ENCODE measurements at regions of chr5 and their contacts with region 1.

Region 1: DNA sequence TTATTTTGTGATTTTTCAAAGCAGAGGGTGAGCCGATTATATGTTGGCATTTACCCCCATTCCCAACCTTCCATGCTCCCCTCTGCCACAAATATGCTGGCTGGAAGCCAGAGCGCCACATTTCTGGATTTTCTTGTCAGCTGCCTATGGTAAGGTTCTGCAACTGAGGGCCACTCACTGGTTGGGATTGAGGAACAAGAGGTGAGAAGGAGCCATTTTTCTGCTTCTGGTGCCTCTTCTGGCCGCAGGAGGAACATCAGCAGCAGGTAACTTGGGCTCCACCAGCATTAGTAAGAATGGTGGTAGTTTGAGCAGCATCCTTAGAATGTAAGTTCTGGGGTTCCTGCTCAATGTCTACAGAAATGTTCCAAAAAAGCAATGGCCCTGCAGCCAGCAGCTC is 159.5 kb upstream of the MAST4 start:
- DNase-seq: no peak
- H3K4me3 ChIP-seq: no peak overlapping the region
- H3K27ac ChIP-seq: no peak overlapping the region
- H3K4me1 ChIP-seq: no peaks in the 10 kb centered on the region
- H3K27me3 ChIP-seq: no peaks in the 10 kb centered on the region
- CTCF ChIP-seq: peak in 1 of 3 experiments; percentile 8
- POLR2A ChIP-seq: no peak

Region 2: GRCh38 chr5:65481635-65482295 is 955.0 kb before region 1 on chr5 and contains the start of gene ADAMTS6:
- intact Hi-C with region 1: no loop called
- DNase-seq: peak; percentile 94
- H3K4me3 ChIP-seq: peak within 1 kb of the TSS; percentile 57 to 69
- H3K27ac ChIP-seq: peak within 1 kb of the TSS; percentile 86 to 96
- H3K4me1 ChIP-seq: peaks cover 6% of the 10 kb centered on the region
- H3K27me3 ChIP-seq: no peaks in the 10 kb centered on the region
- CTCF ChIP-seq: no peak
- POLR2A ChIP-seq: peak; percentile 47
- total RNA-seq, gene ADAMTS6: 25.5 to 43.1 TPM

Region 3: DNA sequence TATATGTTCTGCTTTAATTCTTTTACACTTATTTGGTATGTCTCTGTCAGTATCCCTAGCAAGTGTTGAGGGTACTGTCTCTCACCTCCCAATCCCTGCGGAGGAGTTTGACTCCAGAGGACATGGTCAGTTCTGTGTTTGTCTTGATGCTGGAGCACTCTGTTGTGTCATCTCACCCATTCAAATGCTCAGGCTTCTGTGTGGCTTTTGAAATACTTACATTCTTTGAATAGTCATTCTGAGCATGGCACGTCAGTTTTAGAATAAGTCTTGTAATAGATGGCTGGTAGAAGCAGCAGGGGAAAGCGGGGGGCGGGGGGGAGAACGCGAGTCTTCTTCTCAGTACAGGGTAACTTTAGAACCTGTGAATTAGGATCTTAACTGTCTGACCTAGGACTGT is 171.8 kb after region 1 on chr5:
- intact Hi-C with region 1: no loop called
- DNase-seq: no peak
- H3K4me3 ChIP-seq: no peak overlapping the region
- H3K27ac ChIP-seq: no peak overlapping the region
- H3K4me1 ChIP-seq: no peaks in the 10 kb centered on the region
- H3K27me3 ChIP-seq: no peaks in the 10 kb centered on the region
- CTCF ChIP-seq: no peak
- POLR2A ChIP-seq: no peak

Region 4: GRCh38 chr5:68246802-68247201 is 1810.1 kb after region 1 on chr5:
- intact Hi-C with region 1: loop called (anchors 5 kb)
- DNase-seq: no peak
- H3K4me3 ChIP-seq: no peak overlapping the region
- H3K27ac ChIP-seq: no peak overlapping the region
- H3K4me1 ChIP-seq: peaks cover 23% of the 10 kb centered on the region
- H3K27me3 ChIP-seq: no peaks in the 10 kb centered on the region
- CTCF ChIP-seq: no peak
- POLR2A ChIP-seq: no peak

Measured in testis (tissue), 5 donors.